ENCODE measurements at regions of chr2 and their contacts with region 1.

Region 1: DNA sequence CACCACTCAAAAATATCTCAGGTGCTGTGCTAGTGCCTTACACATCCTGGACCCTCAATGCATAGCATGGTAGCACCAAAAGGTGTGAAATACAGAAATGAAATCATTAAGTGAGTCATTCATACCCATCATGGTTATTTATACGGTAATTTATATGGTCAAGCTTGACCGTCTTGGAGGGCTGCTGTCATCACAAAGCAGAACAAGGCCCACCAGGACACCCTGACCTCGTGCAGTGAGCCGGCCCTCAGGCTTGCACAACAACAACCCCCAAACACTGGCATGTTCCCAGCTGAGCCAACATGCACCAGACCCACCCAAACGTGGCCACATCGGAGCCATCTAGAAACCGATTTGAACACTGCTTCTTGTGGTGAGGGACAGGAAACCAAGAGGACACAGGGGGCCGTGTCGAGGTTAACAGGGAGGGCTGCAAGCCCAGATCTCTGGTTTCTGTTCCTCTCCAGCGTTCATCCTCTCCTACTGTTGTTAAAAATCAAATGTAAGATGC is 378.5 kb upstream of the ID2 start:
- DNase-seq: peak; percentile 88
- H3K4me3 Mint-ChIP-seq: peak overlapping the region; percentile 44
- H3K27ac Mint-ChIP-seq: peak overlapping the region; percentile 91
- H3K4me1 Mint-ChIP-seq: peaks cover 88% of the 10 kb centered on the region
- H3K27me3 Mint-ChIP-seq: no peaks in the 10 kb centered on the region

Region 2: DNA sequence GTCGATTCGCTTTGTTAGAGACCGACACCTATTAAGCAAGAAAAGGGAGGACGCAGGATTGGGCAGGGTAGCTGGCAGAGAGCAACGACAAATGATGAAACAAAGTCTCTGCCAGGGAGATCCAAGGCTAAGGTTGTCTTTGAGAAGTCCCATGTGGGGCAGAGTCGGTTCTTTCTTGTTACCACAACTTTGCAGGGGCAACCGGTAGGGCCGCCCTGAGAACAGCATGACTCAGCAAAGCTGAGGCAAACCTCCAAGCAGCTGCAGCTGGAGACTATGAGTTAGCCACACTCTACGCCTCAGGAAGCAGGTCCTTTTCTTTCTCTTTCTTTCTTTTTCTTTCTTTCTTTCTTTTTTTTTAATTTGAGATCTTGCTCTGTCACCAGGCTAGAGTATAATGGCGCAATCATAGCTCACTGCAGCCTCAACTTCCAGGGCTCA is 73.8 kb before region 1 on chr2:
- CTCF ChIA-PET with region 1: no interaction called
- POLR2A ChIA-PET with region 1: interaction called, 13 read pairs
- DNase-seq: peak; percentile 74
- H3K4me3 Mint-ChIP-seq: no peak overlapping the region
- H3K27ac Mint-ChIP-seq: peak overlapping the region; percentile 68
- H3K4me1 Mint-ChIP-seq: peaks cover 14% of the 10 kb centered on the region
- H3K27me3 Mint-ChIP-seq: no peaks in the 10 kb centered on the region

Region 3: DNA sequence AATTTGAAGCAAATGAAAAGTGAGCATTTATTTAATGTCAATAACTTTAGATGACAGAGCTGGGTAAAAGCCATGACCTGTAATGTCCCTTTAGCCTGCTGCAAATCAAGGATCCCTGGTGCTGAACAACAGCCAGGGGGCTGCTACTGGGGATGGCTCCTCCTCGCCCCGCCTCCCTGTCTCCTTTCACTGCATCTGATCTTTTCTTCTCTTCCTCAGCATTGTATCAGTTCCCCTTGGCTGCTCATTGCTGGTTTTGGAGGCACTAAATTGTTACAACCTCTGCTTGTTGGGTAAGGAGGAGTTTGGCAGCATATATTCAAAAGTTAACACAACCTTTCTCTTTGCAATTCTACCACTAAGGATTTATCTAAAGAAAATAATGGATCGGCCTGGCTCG is 142.2 kb after region 1 on chr2:
- CTCF ChIA-PET with region 1: no interaction called
- POLR2A ChIA-PET with region 1: no interaction called
- DNase-seq: no peak
- H3K4me3 Mint-ChIP-seq: no peak overlapping the region
- H3K27ac Mint-ChIP-seq: no peak overlapping the region
- H3K4me1 Mint-ChIP-seq: peaks cover 17% of the 10 kb centered on the region
- H3K27me3 Mint-ChIP-seq: peaks cover 3% of the 10 kb centered on the region

Measured in activated CD4-positive, alpha-beta memory T cell treated with anti-CD3 and anti-CD28 coated beads, Interleukin-2, amount 10 ng/mL, durations not matched to agents 7 days and 5 days (primary cell).